ENCODE measurements at regions of chr11 and their contacts with region 1.

Region 1: GRCh38 chr11:122655527-122656072 is at the start of gene UBASH3B:
- DNase-seq: peak; percentile 76
- H3K4me3 Mint-ChIP-seq: peak within 1 kb of the TSS; percentile 81
- H3K27ac Mint-ChIP-seq: peak within 1 kb of the TSS; percentile 85
- H3K4me1 Mint-ChIP-seq: peaks cover 40% of the 10 kb centered on the region
- H3K27me3 Mint-ChIP-seq: peaks cover 4% of the 10 kb centered on the region
- total RNA-seq, gene UBASH3B: 18.8 to 20.8 TPM

Region 2: GRCh38 chr11:122628810-122629555 is 26.6 kb before region 1 on chr11:
- CTCF ChIA-PET with region 1: interaction called, 6 read pairs
- POLR2A ChIA-PET with region 1: no interaction called
- intact Hi-C with region 1: loop called (anchors 2 kb)
- DNase-seq: peak; percentile 79
- H3K4me3 Mint-ChIP-seq: no peak overlapping the region
- H3K27ac Mint-ChIP-seq: no peak overlapping the region
- H3K4me1 Mint-ChIP-seq: peaks cover 6% of the 10 kb centered on the region
- H3K27me3 Mint-ChIP-seq: peaks cover 1% of the 10 kb centered on the region

Region 3: GRCh38 chr11:122690801-122691548 is 35.4 kb after region 1 on chr11:
- CTCF ChIA-PET with region 1: interaction called, 13 read pairs
- POLR2A ChIA-PET with region 1: interaction called, 4 read pairs
- intact Hi-C with region 1: loop called (anchors 1 kb)
- DNase-seq: peak; percentile 32
- H3K4me3 Mint-ChIP-seq: peak overlapping the region; percentile 56
- H3K27ac Mint-ChIP-seq: peak overlapping the region; percentile 76
- H3K4me1 Mint-ChIP-seq: peaks cover 76% of the 10 kb centered on the region
- H3K27me3 Mint-ChIP-seq: no peaks in the 10 kb centered on the region

Region 4: DNA sequence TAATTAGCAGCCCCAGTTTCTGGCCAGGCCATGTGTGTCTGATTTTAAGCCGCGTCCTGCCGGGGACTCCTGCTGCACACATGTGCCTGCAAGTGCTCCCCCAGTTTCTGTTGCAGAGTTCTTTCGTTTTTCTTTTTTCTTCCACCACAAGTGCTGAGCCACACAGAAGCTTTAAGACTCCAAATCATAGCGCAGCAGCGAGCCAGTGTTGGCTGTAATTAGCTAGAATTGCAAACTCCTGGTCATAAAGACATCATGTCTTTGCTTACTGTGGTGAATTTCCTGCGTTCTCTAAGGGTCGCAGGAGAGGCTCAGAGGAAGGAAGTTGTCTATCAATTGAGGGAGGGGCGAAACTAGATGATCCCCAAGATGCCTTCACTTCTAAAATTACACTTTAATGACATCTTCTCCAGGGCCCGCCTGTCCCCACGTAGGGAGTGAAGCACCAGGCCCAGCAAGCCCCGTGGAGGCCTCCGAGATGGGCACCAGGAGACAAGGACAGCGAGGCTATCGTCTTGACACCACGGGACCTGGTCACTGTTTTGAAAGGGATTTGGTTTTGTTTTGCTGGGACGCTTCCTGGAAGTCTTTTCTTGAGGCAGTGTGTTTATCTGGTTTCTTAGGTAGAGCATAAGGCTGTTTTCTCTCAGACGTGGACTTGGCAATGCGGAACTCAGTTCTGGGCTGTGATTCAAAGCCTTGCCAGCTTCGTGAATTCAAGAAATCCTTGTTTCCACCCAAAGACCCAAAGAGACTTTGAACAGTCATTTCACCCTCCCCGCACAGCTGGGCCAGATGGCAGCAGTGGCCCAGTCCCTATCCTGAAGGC is 71.7 kb after region 1 on chr11:
- CTCF ChIA-PET with region 1: interaction called, 10 read pairs
- POLR2A ChIA-PET with region 1: interaction called, 14 read pairs
- intact Hi-C with region 1: no loop called
- DNase-seq: peak; percentile 76
- H3K4me3 Mint-ChIP-seq: peak overlapping the region; percentile 53
- H3K27ac Mint-ChIP-seq: peak overlapping the region; percentile 71
- H3K4me1 Mint-ChIP-seq: peaks cover 63% of the 10 kb centered on the region
- H3K27me3 Mint-ChIP-seq: no peaks in the 10 kb centered on the region

Region 5: GRCh38 chr11:122749005-122749687 is 93.5 kb after region 1 on chr11:
- CTCF ChIA-PET with region 1: interaction called, 136 read pairs
- POLR2A ChIA-PET with region 1: interaction called, 11 read pairs
- intact Hi-C with region 1: loop called (anchors 1 kb)
- DNase-seq: peak; percentile 83
- H3K4me3 Mint-ChIP-seq: no peak overlapping the region
- H3K27ac Mint-ChIP-seq: no peak overlapping the region
- H3K4me1 Mint-ChIP-seq: peaks cover 33% of the 10 kb centered on the region
- H3K27me3 Mint-ChIP-seq: no peaks in the 10 kb centered on the region

Region 6: GRCh38 chr11:122781378-122782195 is 126.0 kb after region 1 on chr11:
- CTCF ChIA-PET with region 1: interaction called, 22 read pairs
- POLR2A ChIA-PET with region 1: interaction called, 3 read pairs
- intact Hi-C with region 1: no loop called
- DNase-seq: peak; percentile 84
- H3K4me3 Mint-ChIP-seq: no peak overlapping the region
- H3K27ac Mint-ChIP-seq: no peak overlapping the region
- H3K4me1 Mint-ChIP-seq: peaks cover 23% of the 10 kb centered on the region
- H3K27me3 Mint-ChIP-seq: no peaks in the 10 kb centered on the region

Measured in activated CD4-positive, alpha-beta memory T cell treated with anti-CD3 and anti-CD28 coated beads for 36 hours (primary cell).